HepG2 (cell line): ENCODE measurements at regions of chr5 and their contacts with region 1.

Region 1: GRCh38 chr5:59193616-59194319 is 610.9 kb downstream of the RAB3C start:
- DNase-seq: no peak
- ATAC-seq: no peak
- H3K4me3 ChIP-seq: no peak overlapping the region
- H3K27ac ChIP-seq: no peak overlapping the region
- H3K4me1 ChIP-seq: no peaks in the 10 kb centered on the region; the same call in 1 of the 2 replicates
- H3K27me3 ChIP-seq: no peaks in the 10 kb centered on the region
- CTCF ChIP-seq: no peak
- EP300 ChIP-seq: no peak
- POLR2A ChIP-seq: no peak
- RAD21 ChIP-seq: no peak

Region 2: GRCh38 chr5:59143926-59144333 is 49.8 kb before region 1 on chr5:
- CTCF ChIA-PET with region 1: no interaction called
- POLR2A ChIA-PET with region 1: no interaction called
- in situ Hi-C with region 1: no loop called
- intact Hi-C with region 1: no loop called
- DNase-seq: no peak
- ATAC-seq: no peak
- H3K4me3 ChIP-seq: no peak overlapping the region
- H3K27ac ChIP-seq: no peak overlapping the region
- H3K4me1 ChIP-seq: no peaks in the 10 kb centered on the region
- H3K27me3 ChIP-seq: no peaks in the 10 kb centered on the region; a peak in 1 of 5 replicates
- CTCF ChIP-seq: no peak
- EP300 ChIP-seq: no peak
- POLR2A ChIP-seq: no peak
- RAD21 ChIP-seq: no peak

Region 3: GRCh38 chr5:59218424-59219045 is 24.8 kb after region 1 on chr5:
- CTCF ChIA-PET with region 1: no interaction called
- POLR2A ChIA-PET with region 1: no interaction called
- in situ Hi-C with region 1: no loop called
- intact Hi-C with region 1: no loop called
- DNase-seq: peak; percentile 8
- ATAC-seq: no peak
- H3K4me3 ChIP-seq: no peak overlapping the region
- H3K27ac ChIP-seq: no peak overlapping the region
- H3K4me1 ChIP-seq: peaks cover 24% of the 10 kb centered on the region
- H3K27me3 ChIP-seq: no peaks in the 10 kb centered on the region
- CTCF ChIP-seq: no peak
- EP300 ChIP-seq: no peak
- POLR2A ChIP-seq: no peak
- RAD21 ChIP-seq: no peak

Region 4: DNA sequence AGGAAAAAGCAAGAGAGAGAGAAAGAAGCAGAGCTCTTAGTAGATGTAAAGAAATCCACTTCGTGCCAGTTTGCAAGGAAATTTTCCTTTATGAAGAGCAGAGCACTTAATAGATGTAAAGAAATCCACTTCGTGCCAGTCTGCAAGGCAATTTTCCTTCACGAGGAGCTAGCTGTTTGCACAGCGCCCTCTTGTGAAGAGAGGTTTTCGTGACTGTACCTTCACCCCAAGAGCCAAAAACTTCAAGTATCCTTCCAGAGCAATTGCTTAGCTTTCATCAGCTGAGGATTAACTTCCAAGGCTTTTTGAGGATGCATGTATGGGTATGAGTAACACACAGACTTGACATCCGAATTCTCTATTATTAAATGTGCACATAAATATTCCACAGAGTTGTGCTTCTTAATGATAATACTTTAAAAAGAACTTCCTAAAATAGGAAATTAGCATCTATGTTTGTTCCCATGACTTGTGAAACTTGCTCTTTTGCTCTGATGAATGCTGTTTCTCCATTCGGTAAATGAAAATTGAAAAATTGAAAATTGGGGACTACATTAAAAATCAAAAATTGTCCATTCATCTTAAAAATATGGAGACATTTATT is 174.1 kb after region 1 on chr5:
- CTCF ChIA-PET with region 1: interaction called, 23 read pairs
- POLR2A ChIA-PET with region 1: no interaction called
- in situ Hi-C with region 1: loop called (anchors 5 kb)
- intact Hi-C with region 1: loop called (anchors 1 kb)
- DNase-seq: peak; percentile 30
- ATAC-seq: peak; percentile 63
- H3K4me3 ChIP-seq: no peak overlapping the region
- H3K27ac ChIP-seq: no peak overlapping the region
- H3K4me1 ChIP-seq: no peaks in the 10 kb centered on the region
- H3K27me3 ChIP-seq: no peaks in the 10 kb centered on the region
- CTCF ChIP-seq: peak; percentile 79
- EP300 ChIP-seq: no peak
- POLR2A ChIP-seq: no peak
- RAD21 ChIP-seq: no peak